Activated CD8-positive, alpha-beta memory T cell treated with anti-CD3 and anti-CD28 coated beads, Interleukin-2, amount 10 ng/mL, durations not matched to agents 7 days and 5 days (primary cell): ENCODE measurements at regions of chr3 and their contacts with region 1.

Region 1: GRCh38 chr3:56801662-56802377 is at the start of gene ARHGEF3:
- DNase-seq: peak; percentile 90
- ATAC-seq: peak; percentile 88
- H3K4me3 Mint-ChIP-seq: peak within 1 kb of the TSS; percentile 96
- H3K27ac Mint-ChIP-seq: peak within 1 kb of the TSS; percentile 83
- H3K4me1 Mint-ChIP-seq: peaks cover 35% of the 10 kb centered on the region
- H3K27me3 Mint-ChIP-seq: no peaks in the 10 kb centered on the region
- total RNA-seq, gene ARHGEF3: 94.0 to 96.4 TPM

Region 2: DNA sequence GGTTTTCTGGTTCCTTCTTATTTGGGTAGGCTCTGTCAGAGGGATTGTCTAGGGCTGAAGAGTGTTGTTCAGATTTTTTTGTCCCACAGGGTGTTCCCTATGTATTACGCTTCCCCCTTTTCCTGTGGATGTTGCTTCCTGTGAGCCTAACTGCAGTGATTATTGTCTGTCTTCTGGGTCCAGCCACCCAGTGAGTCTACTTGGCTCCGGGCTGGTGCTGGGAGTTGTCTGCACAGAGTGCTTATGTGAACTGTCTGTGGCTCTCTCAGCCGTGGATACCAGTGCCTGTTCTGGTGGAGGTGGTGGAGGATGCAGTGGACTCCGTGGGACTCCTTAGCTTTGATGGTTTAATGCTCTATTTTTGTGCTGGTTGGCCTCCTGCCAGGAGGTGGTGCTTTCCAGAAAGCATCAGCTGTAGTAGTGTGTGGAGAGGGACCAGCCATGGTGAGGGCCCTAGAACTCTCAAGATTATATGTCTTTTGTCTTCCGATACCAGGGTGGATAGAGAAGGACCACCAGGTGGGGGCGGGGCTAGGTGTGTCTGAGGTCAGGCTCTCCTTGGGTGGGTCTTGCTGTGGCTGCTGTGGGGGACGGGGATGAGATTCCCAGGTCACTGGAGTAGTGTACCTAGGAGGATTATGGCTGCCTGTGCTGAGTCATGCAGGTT is 191.0 kb before region 1 on chr3:
- CTCF ChIA-PET with region 1: no interaction called
- DNase-seq: no peak
- ATAC-seq: no peak
- H3K4me3 Mint-ChIP-seq: no peak overlapping the region
- H3K27ac Mint-ChIP-seq: peak overlapping the region; percentile 88
- H3K4me1 Mint-ChIP-seq: peaks cover 65% of the 10 kb centered on the region
- H3K27me3 Mint-ChIP-seq: no peaks in the 10 kb centered on the region

Region 3: GRCh38 chr3:56693750-56694149 is 108.1 kb before region 1 on chr3:
- CTCF ChIA-PET with region 1: interaction called, 35 read pairs
- DNase-seq: no peak
- ATAC-seq: peak; percentile 17
- H3K4me3 Mint-ChIP-seq: peak overlapping the region; percentile 70
- H3K27ac Mint-ChIP-seq: peak overlapping the region; percentile 93
- H3K4me1 Mint-ChIP-seq: peaks cover 43% of the 10 kb centered on the region
- H3K27me3 Mint-ChIP-seq: no peaks in the 10 kb centered on the region

Region 4: DNA sequence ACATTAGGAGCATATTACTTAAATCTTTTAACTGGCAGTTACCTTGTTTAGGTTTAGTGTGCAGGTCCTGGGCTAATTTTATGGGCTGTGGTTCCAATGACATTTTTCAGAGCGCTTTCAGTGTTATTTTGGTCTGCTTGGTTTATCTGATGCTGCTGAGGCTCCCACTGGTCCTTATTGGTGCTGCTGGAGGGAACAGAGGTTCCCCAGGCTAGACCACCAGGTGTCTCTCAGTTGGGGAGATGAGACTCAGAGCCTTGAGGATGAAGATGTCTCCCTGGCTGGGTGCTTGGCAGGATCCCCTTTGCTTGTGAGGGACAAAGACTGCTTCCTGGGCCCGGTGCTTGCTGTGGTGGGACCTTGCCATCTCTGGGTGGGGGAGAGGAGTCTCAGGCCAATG is 90.5 kb before region 1 on chr3:
- CTCF ChIA-PET with region 1: interaction called, 203 read pairs
- DNase-seq: no peak
- ATAC-seq: no peak
- H3K4me3 Mint-ChIP-seq: no peak overlapping the region
- H3K27ac Mint-ChIP-seq: no peak overlapping the region
- H3K4me1 Mint-ChIP-seq: peaks cover 4% of the 10 kb centered on the region
- H3K27me3 Mint-ChIP-seq: no peaks in the 10 kb centered on the region

Region 5: GRCh38 chr3:56753206-56753820 is 48.5 kb before region 1 on chr3:
- CTCF ChIA-PET with region 1: interaction called, 36 read pairs
- DNase-seq: peak; percentile 84
- ATAC-seq: peak; percentile 92
- H3K4me3 Mint-ChIP-seq: peak overlapping the region; percentile 84
- H3K27ac Mint-ChIP-seq: peak overlapping the region; percentile 83
- H3K4me1 Mint-ChIP-seq: peaks cover 61% of the 10 kb centered on the region
- H3K27me3 Mint-ChIP-seq: no peaks in the 10 kb centered on the region

Region 6: DNA sequence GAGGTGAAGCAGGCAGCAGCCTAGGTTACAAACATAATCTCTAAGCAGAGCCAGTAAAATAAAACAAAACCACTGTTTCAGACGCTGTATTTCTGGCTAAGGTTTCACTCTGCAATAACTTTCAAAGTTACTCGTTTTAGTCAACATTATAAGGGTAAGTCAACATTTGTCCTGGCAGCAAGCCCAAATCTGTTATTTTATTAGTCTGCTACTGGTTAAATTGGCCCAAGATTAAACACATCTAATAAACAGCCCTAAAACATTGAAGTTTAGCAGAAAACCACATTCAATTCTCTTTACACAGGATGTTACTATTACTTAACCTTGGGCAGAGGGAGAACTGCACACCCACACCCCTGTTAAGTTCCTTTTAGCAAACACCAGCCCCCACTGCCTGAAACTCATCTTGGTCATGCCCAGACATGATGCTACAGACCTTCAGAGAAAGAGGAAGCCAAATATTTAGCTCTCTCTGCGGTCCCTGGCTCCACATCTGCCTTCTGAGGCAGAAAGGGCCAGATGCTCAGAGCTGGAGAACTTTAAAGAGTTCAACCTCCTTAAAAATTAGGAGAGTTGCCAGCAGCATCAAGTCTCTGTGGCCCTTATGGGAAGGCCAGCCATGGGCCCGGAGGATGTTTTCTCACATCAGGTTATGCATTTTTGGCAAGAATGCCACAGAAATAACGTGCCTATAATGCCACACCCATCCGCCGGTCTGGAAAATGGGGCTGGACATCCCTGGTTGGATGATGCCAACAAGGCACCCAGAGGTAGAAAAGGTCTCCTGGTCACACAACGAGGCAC is 18.0 kb before region 1 on chr3:
- CTCF ChIA-PET with region 1: interaction called, 147 read pairs
- DNase-seq: peak; percentile 92
- ATAC-seq: peak; percentile 80
- H3K4me3 Mint-ChIP-seq: peak overlapping the region; percentile 58
- H3K27ac Mint-ChIP-seq: peak overlapping the region; percentile 92
- H3K4me1 Mint-ChIP-seq: peaks cover 96% of the 10 kb centered on the region
- H3K27me3 Mint-ChIP-seq: no peaks in the 10 kb centered on the region

Region 7: DNA sequence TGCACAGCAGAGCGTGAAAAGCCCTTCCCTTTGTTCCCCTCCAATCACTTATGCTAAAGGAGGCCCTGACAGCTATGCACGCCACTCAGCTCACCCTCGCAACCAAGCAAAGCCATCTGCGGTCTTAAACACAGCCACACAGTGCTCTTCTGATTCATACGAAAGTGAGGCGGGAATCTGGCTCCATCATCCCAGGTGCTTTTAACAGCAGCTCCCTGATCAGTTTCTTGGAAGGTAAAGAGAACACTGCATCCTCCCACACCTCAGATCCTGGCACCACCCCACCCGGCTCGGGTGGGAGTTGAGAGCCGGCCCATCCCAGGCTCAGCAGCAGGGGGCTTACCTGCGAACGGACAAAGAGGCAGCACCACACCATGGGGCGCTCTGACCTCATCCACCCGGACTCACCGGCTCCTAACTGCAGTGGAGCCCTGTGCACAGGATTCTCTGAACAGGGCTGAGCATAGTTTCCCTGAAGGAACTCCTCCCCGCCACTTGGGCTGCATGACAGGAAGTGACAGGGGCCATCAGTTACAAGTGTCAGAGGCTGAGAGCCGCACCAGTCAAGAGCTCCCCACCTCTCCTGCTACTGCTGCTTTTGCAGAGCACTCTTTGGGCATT is 114.3 kb after region 1 on chr3:
- CTCF ChIA-PET with region 1: interaction called, 61 read pairs
- DNase-seq: peak; percentile 94
- ATAC-seq: peak; percentile 88
- H3K4me3 Mint-ChIP-seq: peak overlapping the region; percentile 96
- H3K27ac Mint-ChIP-seq: peak overlapping the region; percentile 100
- H3K4me1 Mint-ChIP-seq: peaks cover 68% of the 10 kb centered on the region
- H3K27me3 Mint-ChIP-seq: no peaks in the 10 kb centered on the region

Region 8: DNA sequence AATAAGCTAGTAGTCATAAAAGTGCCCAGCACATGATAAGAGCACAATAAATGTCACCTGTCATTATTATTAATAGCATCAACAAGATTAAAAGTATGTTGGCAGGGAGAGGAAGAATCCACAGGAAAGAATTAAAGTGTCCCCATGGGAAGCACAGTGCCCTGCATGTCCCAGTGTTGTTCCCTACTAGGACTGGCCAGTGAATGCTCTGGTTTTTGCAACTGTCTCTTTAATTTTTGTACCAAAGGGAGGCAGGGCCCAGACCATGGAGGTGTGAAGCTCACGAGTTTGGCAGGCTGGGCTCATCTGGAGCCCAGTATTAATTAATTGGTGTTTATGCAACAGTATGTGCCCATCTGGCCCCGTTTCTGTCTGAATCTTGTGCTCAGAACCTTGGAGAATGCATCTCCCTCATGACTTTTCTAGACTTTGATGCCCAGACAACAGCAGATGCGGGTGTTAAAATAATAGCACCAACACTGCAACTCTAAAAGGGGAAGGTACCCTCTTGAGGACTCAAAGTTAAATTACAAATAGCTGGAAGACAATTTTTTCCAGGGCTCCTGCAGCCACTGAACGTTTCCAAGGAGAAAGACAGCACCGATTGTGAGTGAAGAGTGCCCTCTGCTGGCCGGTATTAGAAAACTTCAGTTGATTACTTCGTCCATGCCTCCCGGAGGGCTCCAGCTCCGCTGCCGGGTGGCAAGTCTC is 186.8 kb after region 1 on chr3:
- CTCF ChIA-PET with region 1: interaction called, 128 read pairs
- DNase-seq: peak; percentile 74
- ATAC-seq: peak; percentile 73
- H3K4me3 Mint-ChIP-seq: no peak overlapping the region
- H3K27ac Mint-ChIP-seq: no peak overlapping the region
- H3K4me1 Mint-ChIP-seq: peaks cover 25% of the 10 kb centered on the region
- H3K27me3 Mint-ChIP-seq: peaks cover 24% of the 10 kb centered on the region